Upper lobe of right lung (tissue), 1 donor: ENCODE measurements at regions of chr3 and their contacts with region 1.

Region 1: DNA sequence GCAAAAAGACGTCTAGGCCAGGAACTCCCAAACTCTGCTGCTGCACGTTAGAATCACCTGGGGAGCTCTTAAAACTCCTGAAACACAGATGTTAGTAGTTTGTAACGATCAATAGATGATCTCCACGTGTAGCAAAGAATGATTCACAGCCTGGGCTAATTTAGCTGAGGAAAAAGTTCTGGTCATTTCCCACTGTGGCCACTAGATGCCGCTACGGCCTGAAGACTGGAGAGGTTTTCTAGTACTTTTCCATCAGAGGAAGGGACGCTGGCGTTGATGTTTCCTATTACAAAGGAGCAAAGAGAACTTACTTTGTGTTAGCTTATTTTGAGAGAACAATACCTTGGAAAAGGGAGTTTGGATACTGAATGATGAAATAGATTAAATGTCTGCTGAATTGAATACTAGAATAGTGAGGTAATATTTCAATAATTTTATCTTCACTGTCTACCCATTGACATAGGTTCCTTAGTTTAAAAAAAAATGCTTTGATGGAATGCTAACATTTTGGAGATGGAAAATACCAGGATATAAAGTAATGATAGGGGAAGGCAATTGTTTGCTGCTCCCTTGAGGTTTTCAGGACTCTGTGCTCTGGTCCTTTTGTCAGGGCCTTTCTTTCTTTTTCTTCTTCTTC is 159.1 kb downstream of the P3H2 start:
- DNase-seq: no peak
- ATAC-seq: peak; percentile 92
- H3K4me3 ChIP-seq: no peak overlapping the region
- H3K27ac ChIP-seq: no peak overlapping the region
- H3K4me1 ChIP-seq: no peaks in the 10 kb centered on the region
- H3K27me3 ChIP-seq: no peaks in the 10 kb centered on the region
- CTCF ChIP-seq: peak; percentile 91

Region 2: GRCh38 chr3:189756220-189757078 is 205.2 kb before region 1 on chr3:
- intact Hi-C with region 1: no loop called
- DNase-seq: no peak
- ATAC-seq: no peak
- H3K4me3 ChIP-seq: no peak overlapping the region
- H3K27ac ChIP-seq: no peak overlapping the region
- H3K4me1 ChIP-seq: no peaks in the 10 kb centered on the region
- H3K27me3 ChIP-seq: no peaks in the 10 kb centered on the region
- CTCF ChIP-seq: no peak

Region 3: DNA sequence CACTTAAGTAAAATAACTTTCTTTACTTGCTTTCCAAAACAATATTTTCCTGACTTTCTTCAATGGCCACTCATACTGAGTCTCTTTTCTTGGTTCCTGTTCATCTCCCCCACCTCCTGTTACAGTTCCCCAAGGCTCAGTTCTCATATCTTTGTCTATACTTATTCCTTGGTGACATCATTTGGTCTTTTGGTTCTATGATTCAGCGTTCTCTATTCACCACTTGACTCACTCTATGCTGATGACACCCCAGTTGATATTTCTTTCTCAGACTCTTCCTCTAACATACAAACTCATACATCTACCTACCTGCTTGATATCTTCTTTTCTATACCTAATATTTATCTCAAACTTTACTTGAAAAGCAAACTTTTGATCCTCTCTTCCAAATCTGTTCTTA is 244.1 kb after region 1 on chr3:
- intact Hi-C with region 1: loop called (anchors 10 kb)
- DNase-seq: no peak
- ATAC-seq: no peak
- H3K4me3 ChIP-seq: no peak overlapping the region
- H3K27ac ChIP-seq: no peak overlapping the region
- H3K4me1 ChIP-seq: no peaks in the 10 kb centered on the region
- H3K27me3 ChIP-seq: no peaks in the 10 kb centered on the region
- CTCF ChIP-seq: no peak